SK-N-SH (cell line): ENCODE measurements at regions of chr17 and their contacts with region 1.

Region 1: DNA sequence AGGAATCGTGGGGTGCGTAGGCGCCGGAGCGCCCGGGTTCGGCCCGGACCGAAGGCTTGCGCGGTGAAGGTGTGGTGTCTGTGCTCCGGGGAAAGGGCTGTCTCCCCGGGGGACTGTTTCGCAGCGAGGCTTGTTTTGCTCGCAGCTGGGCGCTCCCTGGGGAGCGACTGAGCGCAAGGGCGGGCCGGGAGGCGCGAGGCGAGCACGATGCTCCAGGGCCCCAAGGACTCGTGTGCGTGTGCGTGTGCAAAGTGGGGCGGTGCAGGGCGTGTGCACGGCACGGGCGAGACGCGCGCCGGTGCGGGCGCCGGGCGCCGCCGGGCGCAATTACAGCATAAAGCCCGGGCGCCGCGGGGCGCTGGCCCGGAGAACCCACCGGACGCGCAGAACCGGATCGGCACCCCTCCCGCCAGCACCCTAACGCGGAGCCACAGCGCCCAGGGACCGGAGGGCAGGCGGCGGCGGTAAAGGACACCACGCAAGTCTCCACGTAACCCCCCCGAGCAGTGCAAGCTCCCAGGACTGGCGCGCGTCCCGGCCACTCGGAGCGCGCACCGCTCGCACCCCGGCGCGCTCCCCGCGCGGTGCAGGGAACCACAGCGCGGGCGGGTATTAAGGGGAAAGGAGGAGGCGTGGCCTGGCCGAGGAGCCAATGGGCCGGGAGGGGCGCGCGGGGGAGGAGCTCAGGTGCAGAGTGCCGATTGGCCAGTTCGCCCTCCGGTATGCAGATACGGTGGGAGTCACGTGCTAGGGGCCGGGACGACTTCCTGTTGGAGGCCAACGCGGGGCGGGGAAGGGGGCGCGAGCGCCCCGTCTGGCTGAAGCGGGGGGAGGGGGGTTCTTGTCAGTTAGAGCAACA is at the start of gene TNRC6C:
- DNase-seq: peak; percentile 100
- H3K4me3 ChIP-seq: peak within 1 kb of the TSS; percentile 80 to 86
- H3K27ac ChIP-seq: peak within 1 kb of the TSS in 1 of 2 experiments; percentile 92; a peak in 2 of 4 replicates
- H3K4me1 ChIP-seq: peaks cover 0 to 35% of the 10 kb centered on the region in 2 experiments; a peak in 3 of 4 replicates
- H3K27me3 ChIP-seq: peaks cover 42% of the 10 kb centered on the region; the same call in 1 of the 2 replicates
- CTCF ChIP-seq: no peak
- EP300 ChIP-seq: no peak; a peak in 1 of 4 replicates
- RAD21 ChIP-seq: peak; percentile 22; the same call in 1 of the 2 replicates
- polyA plus RNA-seq, gene TNRC6C: 1.6 and 2.2 TPM in 2 replicates

Region 2: GRCh38 chr17:77690271-77691161 is 267.6 kb before region 1 on chr17:
- CTCF ChIA-PET with region 1: interaction called, 4 read pairs
- POLR2A ChIA-PET with region 1: interaction called, 11 read pairs
- DNase-seq: peak; percentile 88
- H3K4me3 ChIP-seq: peak overlapping the region in 1 of 2 experiments; percentile 12; a peak in 1 of 4 replicates
- H3K27ac ChIP-seq: peak overlapping the region in 1 of 2 experiments; percentile 93; a peak in 2 of 4 replicates
- H3K4me1 ChIP-seq: peaks cover 0 to 33% of the 10 kb centered on the region in 2 experiments; a peak in 1 of 4 replicates
- H3K27me3 ChIP-seq: peaks cover 48% of the 10 kb centered on the region; the same call in 1 of the 2 replicates
- CTCF ChIP-seq: no peak
- EP300 ChIP-seq: peak in 1 of 2 experiments; percentile 75; a peak in 2 of 4 replicates
- RAD21 ChIP-seq: peak; percentile 8; the same call in 1 of the 2 replicates

Region 3: DNA sequence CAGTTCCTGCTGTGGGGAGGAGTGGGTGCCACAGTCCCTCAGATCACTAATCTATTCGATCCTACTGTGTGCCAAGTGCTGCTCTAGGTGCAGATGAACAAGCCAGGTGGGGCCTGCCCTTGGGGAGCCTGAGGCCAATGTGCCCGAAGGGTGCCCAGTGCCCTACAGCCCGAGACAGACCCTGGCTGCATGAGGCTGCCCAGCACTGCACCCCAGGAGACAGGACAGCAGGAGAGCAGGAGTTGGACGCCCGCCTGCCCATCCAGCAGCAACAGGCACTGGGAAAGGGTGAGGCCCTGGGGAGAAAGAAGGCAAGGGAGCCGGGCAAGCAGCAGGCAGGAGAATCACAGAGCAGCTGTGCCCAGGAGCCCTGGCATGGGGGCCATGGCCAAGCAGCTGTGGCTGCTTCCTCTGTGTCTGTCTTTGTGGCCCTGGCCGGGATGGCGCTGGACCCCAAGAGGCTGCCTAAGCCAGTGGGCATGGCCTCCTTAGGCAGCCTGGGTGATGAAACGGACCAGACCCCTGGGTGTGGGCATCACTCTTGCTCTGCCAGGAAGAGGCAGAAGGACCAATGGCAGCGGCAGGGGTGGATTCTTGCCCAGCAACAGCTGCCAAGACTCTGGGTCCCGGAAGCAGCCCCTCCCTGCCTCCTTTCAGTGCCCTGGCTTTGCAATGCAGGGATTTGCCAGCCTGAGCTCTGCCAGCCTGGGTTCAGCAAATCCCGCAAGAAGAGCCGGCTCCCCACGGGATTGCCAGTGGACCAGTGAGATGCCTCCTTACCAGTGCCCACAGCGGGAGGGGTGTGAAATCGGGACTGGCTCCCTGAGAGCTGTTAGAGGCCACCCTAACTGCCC is 179.2 kb before region 1 on chr17:
- CTCF ChIA-PET with region 1: interaction called, 3 read pairs
- POLR2A ChIA-PET with region 1: interaction called, 16 read pairs
- DNase-seq: peak; percentile 96
- H3K4me3 ChIP-seq: no peak overlapping the region
- H3K27ac ChIP-seq: peak overlapping the region; percentile 56 to 98
- H3K4me1 ChIP-seq: peaks cover 17 to 52% of the 10 kb centered on the region in 2 experiments
- H3K27me3 ChIP-seq: 0 out of 2 replicates have a peak, but pooled peaks cover under 1% of the 10 kb centered on the region
- CTCF ChIP-seq: no peak
- EP300 ChIP-seq: peak in 1 of 2 experiments; percentile 84; a peak in 2 of 4 replicates
- RAD21 ChIP-seq: no peak

Region 4: GRCh38 chr17:77875881-77876509 is 82.1 kb before region 1 on chr17:
- CTCF ChIA-PET with region 1: interaction called, 7 read pairs
- POLR2A ChIA-PET with region 1: interaction called, 131 read pairs
- DNase-seq: no peak
- H3K4me3 ChIP-seq: no peak overlapping the region
- H3K27ac ChIP-seq: no peak overlapping the region
- H3K4me1 ChIP-seq: peaks cover 3 to 62% of the 10 kb centered on the region in 2 experiments; a peak in 2 of 4 replicates
- H3K27me3 ChIP-seq: no peaks in the 10 kb centered on the region
- CTCF ChIP-seq: no peak
- EP300 ChIP-seq: no peak
- RAD21 ChIP-seq: no peak

Region 5: DNA sequence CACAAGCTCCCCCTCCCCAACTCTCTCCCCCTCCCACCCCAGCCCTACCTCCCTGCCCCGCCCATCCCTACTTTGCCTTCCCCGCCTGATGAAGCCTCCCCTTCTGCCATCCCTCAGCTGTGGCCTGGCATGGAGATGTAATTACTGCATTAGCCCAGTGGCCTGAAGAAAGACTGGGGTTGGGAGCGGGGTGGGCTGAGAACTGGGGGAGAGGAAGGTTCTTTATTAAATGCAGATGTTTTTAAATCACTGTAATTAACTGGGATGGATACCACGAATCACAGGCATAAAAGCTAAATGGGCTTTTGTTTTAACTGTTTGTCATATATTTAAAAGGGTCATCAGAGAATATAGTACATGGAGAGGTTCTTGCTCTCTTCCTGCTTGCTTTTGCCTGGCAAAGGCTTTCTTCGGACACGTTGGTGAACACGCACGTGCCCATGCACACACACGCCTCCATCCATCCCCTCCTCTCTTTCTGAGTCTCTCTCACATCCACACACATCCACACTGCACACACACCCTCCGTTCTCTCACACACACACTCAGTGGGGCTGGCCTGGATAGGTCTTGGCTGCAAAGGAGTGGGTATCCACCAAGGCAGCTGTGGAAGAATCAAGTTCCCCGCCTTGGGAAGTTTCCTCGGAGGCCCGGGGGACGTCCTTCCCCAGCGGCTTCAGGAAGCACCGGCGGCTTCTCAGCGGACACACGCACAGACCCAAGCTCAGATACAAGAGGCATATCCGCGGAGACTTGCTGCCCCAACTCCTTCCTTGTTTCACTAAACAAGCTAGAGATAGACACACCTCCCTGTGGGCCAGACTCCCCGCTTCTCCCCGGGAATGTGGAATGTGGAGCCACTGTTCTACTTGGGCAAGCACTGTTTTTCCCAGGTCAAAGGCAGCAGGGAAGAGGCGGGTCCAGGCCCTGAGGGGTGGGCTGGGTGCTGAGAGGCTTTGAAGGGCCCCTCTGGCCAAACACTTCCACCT is 27.0 kb before region 1 on chr17:
- CTCF ChIA-PET with region 1: interaction called, 6 read pairs
- POLR2A ChIA-PET with region 1: interaction called, 37 read pairs
- DNase-seq: peak; percentile 95
- H3K4me3 ChIP-seq: no peak overlapping the region
- H3K27ac ChIP-seq: peak overlapping the region in 1 of 2 experiments; percentile 78; a peak in 2 of 4 replicates
- H3K4me1 ChIP-seq: peaks cover 0 to 34% of the 10 kb centered on the region in 2 experiments; a peak in 1 of 4 replicates
- H3K27me3 ChIP-seq: peaks cover 23% of the 10 kb centered on the region
- CTCF ChIP-seq: no peak
- EP300 ChIP-seq: peak in 1 of 2 experiments; percentile 83; a peak in 2 of 4 replicates
- RAD21 ChIP-seq: peak; percentile 38

Region 6: DNA sequence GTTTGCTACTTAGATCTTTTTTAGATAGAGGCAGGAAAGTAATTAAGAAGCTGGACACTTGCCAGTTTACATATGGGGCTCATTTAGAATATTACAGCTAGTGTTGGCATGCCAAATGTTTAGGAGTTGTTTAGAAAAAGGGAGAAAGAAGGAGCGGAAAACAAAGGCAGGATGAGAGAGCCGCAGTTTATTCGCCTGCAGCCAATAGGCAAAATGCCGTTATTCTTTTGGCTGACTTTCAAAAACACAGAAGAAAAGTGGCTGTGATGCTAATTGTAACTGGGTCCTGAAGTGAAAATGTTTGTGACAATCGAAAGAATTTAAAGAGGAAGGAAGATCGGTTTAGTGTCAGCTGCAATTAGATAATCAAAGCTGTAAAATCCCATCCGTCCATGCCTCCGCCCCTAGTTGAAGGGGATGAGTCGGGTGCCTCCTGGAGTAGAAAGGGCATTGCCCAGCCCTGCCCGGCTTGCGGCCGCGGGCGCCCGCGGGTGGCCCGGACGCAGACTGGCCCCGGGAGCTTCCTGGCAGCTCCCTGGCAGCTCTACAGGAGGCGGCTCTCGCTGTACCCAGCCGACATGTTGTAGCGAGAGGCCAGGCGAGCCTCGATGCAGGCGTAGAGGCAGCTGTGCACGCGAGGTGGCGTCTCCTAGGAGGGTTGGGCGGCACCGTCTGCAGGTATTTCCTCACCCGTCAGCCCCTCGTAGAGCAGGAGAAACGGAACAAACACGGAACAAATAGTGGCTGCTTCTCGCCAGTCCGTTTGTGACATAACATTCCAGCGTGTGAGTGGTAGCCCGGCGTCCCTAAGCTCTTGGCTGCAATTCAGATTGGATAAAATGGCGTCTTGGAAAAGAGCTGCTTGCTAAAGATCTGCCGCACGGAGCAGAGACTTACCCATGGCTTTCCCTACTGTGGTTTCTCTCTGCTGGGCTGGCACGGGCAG is 82.6 kb after region 1 on chr17:
- CTCF ChIA-PET with region 1: interaction called, 3 read pairs
- POLR2A ChIA-PET with region 1: interaction called, 17 read pairs
- DNase-seq: peak; percentile 95
- H3K4me3 ChIP-seq: peak overlapping the region; percentile 72 to 75
- H3K27ac ChIP-seq: peak overlapping the region; percentile 89 to 100
- H3K4me1 ChIP-seq: peaks cover 7 to 41% of the 10 kb centered on the region in 2 experiments; a peak in 2 of 4 replicates
- H3K27me3 ChIP-seq: no peaks in the 10 kb centered on the region
- CTCF ChIP-seq: peak; percentile 40
- EP300 ChIP-seq: peak in 1 of 2 experiments; percentile 77; a peak in 2 of 4 replicates
- RAD21 ChIP-seq: peak; percentile 9; the same call in 1 of the 2 replicates